Activated CD4-positive, alpha-beta T cell treated with anti-CD3 and anti-CD28 coated beads for 36 hours (primary cell): ENCODE measurements at regions of chr1 and their contacts with region 1.

Region 1: DNA sequence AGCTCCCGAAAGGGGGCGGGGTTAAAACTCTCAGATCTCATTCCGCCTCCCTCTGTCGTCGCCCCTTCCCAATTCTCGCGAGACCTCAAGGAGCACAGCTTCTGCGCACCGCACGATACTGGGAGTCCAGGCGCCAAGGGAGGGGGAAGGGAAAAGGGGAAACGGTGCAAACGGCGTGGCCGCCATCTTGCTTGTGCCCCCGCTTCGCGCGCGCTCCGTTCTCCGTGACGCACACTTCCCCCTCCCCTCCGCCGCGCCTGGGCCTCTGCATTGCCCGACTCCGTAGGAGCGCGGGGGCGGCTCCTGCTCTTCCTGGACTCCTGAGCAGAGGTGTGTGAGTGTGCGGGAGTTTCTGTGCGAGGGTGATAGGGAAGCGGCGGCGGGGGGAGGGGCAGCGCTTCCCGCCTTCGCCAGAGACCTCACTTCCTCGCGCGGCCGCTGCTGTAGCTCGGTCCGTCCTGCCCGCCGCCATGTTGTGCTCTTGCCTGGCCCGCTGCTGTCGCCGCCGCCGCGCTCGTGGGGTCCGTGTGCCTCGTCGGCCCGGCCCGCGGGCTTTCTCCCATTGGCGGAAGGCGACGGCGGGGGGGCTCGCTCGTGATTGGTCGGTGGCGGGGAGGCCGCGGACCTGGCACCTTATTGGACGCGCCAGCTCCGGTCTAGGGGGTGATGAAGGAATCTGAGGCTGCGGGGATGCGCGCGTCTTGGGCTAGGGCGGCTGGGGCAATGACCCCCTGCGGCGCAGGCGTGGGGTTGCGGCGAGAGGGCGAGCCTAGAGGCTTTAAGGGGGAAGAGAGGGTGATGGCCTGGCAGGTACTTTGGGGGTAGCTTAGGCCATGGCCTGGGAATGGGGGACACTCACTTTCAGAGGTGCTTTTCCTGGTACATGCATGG is at the start of gene NFYC:
- DNase-seq: peak; percentile 98
- ATAC-seq: peak; percentile 87
- H3K4me3 Mint-ChIP-seq: peak within 1 kb of the TSS; percentile 100
- H3K27ac Mint-ChIP-seq: peak within 1 kb of the TSS; percentile 97
- H3K4me1 Mint-ChIP-seq: peaks cover 56% of the 10 kb centered on the region
- H3K27me3 Mint-ChIP-seq: no peaks in the 10 kb centered on the region
- total RNA-seq, gene NFYC: 53.6 to 85.4 TPM

Region 2: DNA sequence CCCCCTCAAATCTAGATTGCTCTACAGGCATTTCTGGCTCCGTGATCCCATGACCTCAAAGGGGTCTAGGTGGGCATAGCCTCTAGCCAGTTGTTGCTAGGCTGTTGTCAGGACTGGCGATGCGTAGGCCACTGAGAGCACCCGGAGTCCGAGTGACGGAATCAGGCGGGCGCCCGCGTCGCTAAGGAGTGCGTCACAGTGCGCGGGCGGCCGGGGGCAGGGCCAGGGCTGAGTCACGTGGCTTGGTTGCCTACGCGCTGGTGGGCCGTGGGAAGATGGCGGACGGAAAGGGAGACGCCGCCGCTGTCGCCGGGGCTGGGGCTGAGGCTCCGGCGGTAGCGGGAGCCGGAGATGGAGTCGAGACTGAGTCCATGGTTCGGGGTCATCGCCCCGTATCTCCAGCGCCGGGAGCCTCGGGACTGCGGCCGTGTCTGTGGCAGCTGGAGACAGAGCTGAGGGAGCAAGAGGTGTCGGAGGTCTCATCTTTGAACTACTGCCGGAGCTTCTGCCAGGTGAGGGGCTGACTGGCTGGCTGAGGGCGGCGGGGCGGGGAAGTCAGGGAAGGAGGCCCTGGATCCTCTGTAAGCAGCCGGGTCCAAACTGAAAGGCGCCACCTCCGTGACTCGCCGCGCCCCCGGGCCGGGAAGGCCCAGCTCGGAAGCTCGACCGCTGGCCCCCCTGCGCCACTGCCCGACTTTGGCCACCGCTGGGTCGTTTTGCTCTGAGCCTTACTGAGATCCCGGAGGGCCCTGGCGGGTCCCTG is 530.5 kb before region 1 on chr1 and contains the start of gene RLF:
- CTCF ChIA-PET with region 1: no interaction called
- POLR2A ChIA-PET with region 1: no interaction called
- intact Hi-C with region 1: loop called (anchors 5 kb)
- DNase-seq: peak; percentile 98
- ATAC-seq: peak; percentile 81
- H3K4me3 Mint-ChIP-seq: no peak within 1 kb of the TSS
- H3K27ac Mint-ChIP-seq: no peak within 1 kb of the TSS
- H3K4me1 Mint-ChIP-seq: peaks cover 4% of the 10 kb centered on the region
- H3K27me3 Mint-ChIP-seq: no peaks in the 10 kb centered on the region
- total RNA-seq, gene RLF: 20.1 to 20.9 TPM

Region 3: DNA sequence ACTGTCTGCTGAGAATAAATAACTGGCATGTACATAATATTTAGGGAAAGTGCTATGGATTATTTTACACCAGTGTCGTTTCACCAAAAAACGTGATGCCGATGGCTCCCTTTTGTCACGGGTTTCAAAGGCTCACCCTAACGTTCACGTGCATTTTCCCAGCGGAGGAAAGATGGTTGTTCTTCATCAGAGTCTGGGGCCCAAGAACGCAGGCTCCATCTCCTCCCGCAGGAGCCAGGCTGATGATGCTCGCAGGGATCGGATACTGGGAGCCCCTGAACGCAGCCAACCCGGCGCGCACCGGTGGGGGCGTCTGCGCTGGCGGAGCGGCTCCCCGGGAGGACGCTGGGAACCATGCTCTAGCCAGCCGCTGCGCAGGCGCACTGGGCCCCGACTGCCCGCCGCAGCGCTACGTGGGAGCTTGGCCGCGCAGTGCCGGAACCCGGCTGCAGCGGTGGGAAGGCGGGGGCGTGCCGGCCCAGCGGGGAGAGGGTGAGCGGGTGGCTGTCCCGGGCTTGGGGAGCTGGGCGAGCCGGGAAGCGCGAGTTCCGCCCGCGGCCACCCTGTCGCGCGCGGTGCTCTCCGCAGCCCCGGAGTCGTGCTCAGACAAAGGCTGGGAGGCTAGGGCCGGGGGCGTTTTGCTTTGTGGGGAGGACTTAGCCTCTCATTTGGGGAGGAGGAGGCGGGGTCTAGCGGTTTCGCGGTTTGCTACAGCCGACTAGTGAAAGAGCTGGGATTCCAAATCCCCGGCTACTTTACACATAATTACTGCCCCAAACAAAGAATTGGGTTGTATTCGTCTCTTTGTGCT is 241.9 kb before region 1 on chr1 and contains the start of gene ZFP69B:
- CTCF ChIA-PET with region 1: interaction called, 3 read pairs
- POLR2A ChIA-PET with region 1: no interaction called
- intact Hi-C with region 1: loop called in 1 of 2 experiments (anchors 1 kb)
- DNase-seq: peak; percentile 96
- ATAC-seq: peak; percentile 67
- H3K4me3 Mint-ChIP-seq: peak within 1 kb of the TSS; percentile 71
- H3K27ac Mint-ChIP-seq: peak within 1 kb of the TSS; percentile 97
- H3K4me1 Mint-ChIP-seq: peaks cover 30% of the 10 kb centered on the region
- H3K27me3 Mint-ChIP-seq: no peaks in the 10 kb centered on the region
- total RNA-seq, gene ZFP69B: 4.6 to 5.3 TPM

Region 4: GRCh38 chr1:40495315-40495903 is 196.4 kb before region 1 on chr1:
- CTCF ChIA-PET with region 1: no interaction called
- POLR2A ChIA-PET with region 1: no interaction called
- intact Hi-C with region 1: no loop called
- DNase-seq: no peak
- ATAC-seq: no peak
- H3K4me3 Mint-ChIP-seq: no peak overlapping the region
- H3K27ac Mint-ChIP-seq: no peak overlapping the region
- H3K4me1 Mint-ChIP-seq: peaks cover 5% of the 10 kb centered on the region
- H3K27me3 Mint-ChIP-seq: no peaks in the 10 kb centered on the region

Region 5: DNA sequence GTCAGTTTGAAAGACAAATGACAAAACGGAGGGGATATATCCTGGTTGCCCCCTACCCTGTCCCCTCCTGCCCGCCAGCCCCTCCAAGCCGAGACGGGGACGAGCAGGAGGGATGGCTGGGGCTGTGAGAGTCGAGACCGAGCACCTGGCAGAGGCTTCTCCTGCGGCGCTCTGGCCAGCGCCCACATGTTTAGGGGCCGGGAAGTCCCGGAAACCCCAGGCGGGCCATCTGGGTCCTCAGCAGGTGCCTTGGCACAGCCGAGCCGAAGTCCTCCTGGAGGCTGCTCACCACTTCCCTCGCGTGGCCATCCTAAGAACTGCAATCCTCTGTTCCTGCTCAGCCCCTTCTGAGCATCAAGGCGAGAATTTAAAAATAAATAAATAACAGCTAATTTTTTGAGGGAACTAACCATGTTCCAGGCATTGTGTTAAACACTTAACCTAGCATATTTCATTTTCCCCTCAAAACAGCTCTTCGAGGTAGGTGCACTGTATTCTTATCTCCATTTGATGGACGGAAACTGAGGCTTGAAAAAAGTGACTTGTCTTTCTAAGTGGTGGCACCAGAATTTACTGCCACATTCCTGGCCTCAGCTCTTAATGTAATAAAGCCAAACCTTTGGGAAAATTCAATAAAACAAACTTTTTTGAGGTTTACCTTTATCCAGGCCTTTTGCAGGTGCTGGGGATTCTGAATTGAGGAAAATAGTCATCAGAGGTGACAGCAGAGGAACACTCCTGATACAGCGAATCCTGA is 22.8 kb before region 1 on chr1:
- CTCF ChIA-PET with region 1: interaction called, 20 read pairs
- POLR2A ChIA-PET with region 1: interaction called, 4 read pairs
- intact Hi-C with region 1: loop called (anchors 1 to 2 kb)
- DNase-seq: peak; percentile 92
- ATAC-seq: peak; percentile 58
- H3K4me3 Mint-ChIP-seq: peak overlapping the region; percentile 46
- H3K27ac Mint-ChIP-seq: no peak overlapping the region
- H3K4me1 Mint-ChIP-seq: peaks cover 14% of the 10 kb centered on the region
- H3K27me3 Mint-ChIP-seq: no peaks in the 10 kb centered on the region

Region 6: GRCh38 chr1:40709100-40709801 is 17.5 kb after region 1 on chr1:
- CTCF ChIA-PET with region 1: interaction called, 20 read pairs
- POLR2A ChIA-PET with region 1: interaction called, 14 read pairs
- intact Hi-C with region 1: loop called (anchors 1 to 2 kb)
- DNase-seq: peak; percentile 82
- ATAC-seq: peak; percentile 98
- H3K4me3 Mint-ChIP-seq: peak overlapping the region; percentile 85
- H3K27ac Mint-ChIP-seq: peak overlapping the region; percentile 88
- H3K4me1 Mint-ChIP-seq: peaks cover 67% of the 10 kb centered on the region
- H3K27me3 Mint-ChIP-seq: no peaks in the 10 kb centered on the region

Region 7: DNA sequence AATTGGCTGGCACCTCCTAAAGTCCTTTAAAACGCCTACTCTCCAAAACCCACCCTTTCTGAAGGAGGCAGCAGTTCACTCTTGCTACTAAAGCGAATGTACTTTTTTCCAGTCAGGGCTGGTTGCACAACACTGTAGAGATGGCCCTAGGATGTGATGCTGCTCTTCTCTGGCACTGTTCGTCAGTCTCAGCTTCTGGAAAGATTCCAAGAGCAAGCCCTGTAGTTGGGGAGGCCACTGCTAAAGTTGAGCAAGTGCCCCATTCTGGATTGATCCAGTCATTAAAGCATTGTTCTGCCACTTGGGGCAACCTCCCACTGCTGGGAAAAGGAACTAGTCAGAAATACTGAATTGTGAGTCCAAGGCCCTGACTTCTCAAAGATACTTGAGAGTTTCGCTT is 63.3 kb after region 1 on chr1:
- CTCF ChIA-PET with region 1: interaction called, 9 read pairs
- POLR2A ChIA-PET with region 1: interaction called, 14 read pairs
- intact Hi-C with region 1: loop called in 1 of 2 experiments (anchors 2 kb)
- DNase-seq: no peak
- ATAC-seq: no peak
- H3K4me3 Mint-ChIP-seq: no peak overlapping the region
- H3K27ac Mint-ChIP-seq: no peak overlapping the region
- H3K4me1 Mint-ChIP-seq: peaks cover 27% of the 10 kb centered on the region
- H3K27me3 Mint-ChIP-seq: no peaks in the 10 kb centered on the region

Region 8: DNA sequence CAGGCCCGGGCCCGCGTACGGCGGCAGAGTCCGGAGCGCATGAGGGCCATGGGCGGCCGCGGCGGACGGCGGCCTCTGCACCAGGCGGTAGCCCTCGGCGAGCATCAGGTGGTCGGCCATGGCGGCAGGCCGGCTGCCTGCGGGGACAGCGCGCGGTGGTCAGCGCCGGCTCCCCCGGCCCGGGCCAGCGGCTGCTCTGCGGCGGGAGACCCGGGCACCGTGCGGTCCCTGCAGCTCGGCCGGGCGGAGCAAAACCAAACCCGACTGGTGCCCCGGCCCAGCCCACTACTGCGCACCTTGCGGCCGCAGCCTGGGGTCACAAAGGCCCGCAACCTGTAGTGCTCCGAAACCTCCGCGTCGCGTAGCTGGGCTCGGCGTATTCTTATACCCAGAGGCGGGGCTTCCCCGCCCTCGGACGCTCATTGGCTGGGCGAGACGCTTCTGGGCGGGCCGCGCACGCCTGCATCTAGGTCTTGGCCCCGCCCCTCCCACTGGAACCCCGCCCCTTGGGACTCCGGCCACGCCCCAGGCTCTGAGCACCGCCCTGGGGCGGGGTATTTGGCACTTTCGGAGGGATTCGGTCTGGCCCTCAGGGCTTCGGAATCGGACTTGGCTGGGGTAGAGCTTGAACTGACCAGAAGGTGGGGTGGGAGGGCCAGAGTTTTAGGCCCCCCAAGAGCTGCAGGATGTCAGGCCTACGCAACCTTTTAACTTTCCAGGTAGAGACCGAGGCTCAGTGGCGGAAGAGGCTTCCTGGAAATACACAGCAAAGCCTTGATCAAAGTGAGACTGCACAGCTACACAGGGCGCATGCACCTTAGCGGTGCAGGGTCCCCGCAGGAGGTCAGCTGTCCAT is 170.5 kb after region 1 on chr1 and contains the start of gene CITED4:
- CTCF ChIA-PET with region 1: interaction called, 5 read pairs
- POLR2A ChIA-PET with region 1: interaction called, 4 read pairs
- intact Hi-C with region 1: loop called in 1 of 2 experiments (anchors 1 kb)
- DNase-seq: peak; percentile 97
- ATAC-seq: peak; percentile 98
- H3K4me3 Mint-ChIP-seq: peak within 1 kb of the TSS; percentile 84
- H3K27ac Mint-ChIP-seq: peak within 1 kb of the TSS; percentile 96
- H3K4me1 Mint-ChIP-seq: peaks cover 11% of the 10 kb centered on the region
- H3K27me3 Mint-ChIP-seq: peaks cover 11% of the 10 kb centered on the region
- total RNA-seq, gene CITED4: 1.6 to 3.0 TPM